ENCODE measurements at regions of chr3 and their contacts with region 1.

Region 1: GRCh38 chr3:113575206-113575605 is 42.9 kb downstream of the SIDT1 start:
- DNase-seq: peak in 1 of 3 donors; percentile 30
- ATAC-seq: peak; percentile 60
- H3K4me3 ChIP-seq: no peak overlapping the region
- H3K4me1 ChIP-seq: peaks cover 23% of the 10 kb centered on the region
- CTCF ChIP-seq: no peak

Region 2: GRCh38 chr3:112357930-112358780 is 1217.1 kb before region 1 on chr3:
- intact Hi-C with region 1: no loop called
- DNase-seq: no peak
- ATAC-seq: peak; percentile 30
- H3K4me3 ChIP-seq: no peak overlapping the region
- H3K4me1 ChIP-seq: no peaks in the 10 kb centered on the region
- CTCF ChIP-seq: no peak

Region 3: GRCh38 chr3:113495035-113495434 is 80.2 kb before region 1 on chr3:
- intact Hi-C with region 1: loop called in 1 of 2 experiments (anchors 5 kb)
- DNase-seq: peak in 1 of 3 donors; percentile 77
- ATAC-seq: peak; percentile 77
- H3K4me3 ChIP-seq: no peak overlapping the region
- H3K4me1 ChIP-seq: no peaks in the 10 kb centered on the region
- CTCF ChIP-seq: peak; percentile 13

Region 4: GRCh38 chr3:113535898-113536297 is 39.3 kb before region 1 on chr3:
- intact Hi-C with region 1: loop called in 1 of 2 experiments (anchors 5 kb)
- DNase-seq: no peak
- ATAC-seq: no peak
- H3K4me3 ChIP-seq: no peak overlapping the region
- H3K4me1 ChIP-seq: peaks cover 29% of the 10 kb centered on the region
- CTCF ChIP-seq: no peak

Region 5: GRCh38 chr3:113745273-113746068 is 170.3 kb after region 1 on chr3:
- intact Hi-C with region 1: no loop called
- DNase-seq: peak; percentile 66 to 91 (median 79)
- ATAC-seq: peak; percentile 74
- H3K4me3 ChIP-seq: peak overlapping the region; percentile 85
- H3K4me1 ChIP-seq: peaks cover 18% of the 10 kb centered on the region
- CTCF ChIP-seq: peak; percentile 31

Region 6: DNA sequence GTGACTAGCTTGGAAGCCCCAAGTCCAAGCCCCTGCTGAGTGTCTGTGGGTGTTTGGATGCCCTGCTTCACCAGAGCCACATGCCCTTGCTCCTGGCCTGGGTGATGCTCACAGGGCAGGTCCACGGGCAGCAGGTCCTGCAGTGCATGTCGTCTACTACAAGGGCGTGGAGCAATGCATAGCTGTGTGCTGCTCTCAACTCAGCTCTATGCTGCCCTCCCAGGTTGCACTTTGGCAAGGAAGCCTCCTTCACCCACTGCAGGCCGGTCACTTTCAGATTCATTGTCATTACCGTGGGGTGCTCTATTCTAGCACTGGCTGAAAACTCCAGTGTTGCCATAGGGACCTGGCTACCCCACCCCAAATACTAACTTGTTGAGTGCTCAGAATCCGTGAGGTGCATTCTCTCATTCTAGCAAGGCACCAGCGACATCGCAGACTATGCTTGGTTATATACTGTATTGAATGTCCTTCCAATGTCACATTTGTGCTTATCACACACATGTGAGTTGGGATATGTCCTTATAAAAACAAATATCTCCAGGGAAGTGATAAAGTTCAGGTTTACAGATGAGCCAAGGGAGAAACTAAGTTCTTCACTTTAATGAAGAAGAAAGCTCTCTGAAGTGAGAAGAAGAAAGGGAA is 315.2 kb after region 1 on chr3:
- intact Hi-C with region 1: no loop called
- DNase-seq: peak in 2 of 3 donors; percentile 56 to 59
- ATAC-seq: peak; percentile 98
- H3K4me3 ChIP-seq: no peak overlapping the region
- H3K4me1 ChIP-seq: no peaks in the 10 kb centered on the region
- CTCF ChIP-seq: no peak

Measured in mucosa of descending colon (tissue), 3 donors.